HCT116 (cell line): ENCODE measurements at regions of chr1 and their contacts with region 1.

Region 1: GRCh38 chr1:28409090-28409489 is 39.5 kb downstream of the PHACTR4 start:
- DNase-seq: no peak
- ATAC-seq: no peak
- H3K4me3 ChIP-seq: no peak overlapping the region
- H3K27ac ChIP-seq: no peak overlapping the region
- H3K4me1 ChIP-seq: peaks cover 0 to 5% of the 10 kb centered on the region in 2 experiments; a peak in 2 of 4 replicates
- H3K27me3 ChIP-seq: no peaks in the 10 kb centered on the region
- CTCF ChIP-seq: no peak
- POLR2A ChIP-seq: no peak
- RAD21 ChIP-seq: no peak

Region 2: GRCh38 chr1:28510665-28511440 is 101.8 kb after region 1 on chr1:
- CTCF ChIA-PET with region 1: interaction called, 6 read pairs
- POLR2A ChIA-PET with region 1: interaction called, 11 read pairs
- RAD21 ChIA-PET with region 1: no interaction called
- intact Hi-C with region 1: loop called (anchors 2 kb)
- DNase-seq: no peak
- ATAC-seq: peak; percentile 24
- H3K4me3 ChIP-seq: no peak overlapping the region
- H3K27ac ChIP-seq: peak overlapping the region; percentile 97
- H3K4me1 ChIP-seq: peaks cover 19 to 65% of the 10 kb centered on the region in 2 experiments
- H3K27me3 ChIP-seq: no peaks in the 10 kb centered on the region
- CTCF ChIP-seq: no peak
- POLR2A ChIP-seq: peak; percentile 69
- RAD21 ChIP-seq: no peak

Region 3: DNA sequence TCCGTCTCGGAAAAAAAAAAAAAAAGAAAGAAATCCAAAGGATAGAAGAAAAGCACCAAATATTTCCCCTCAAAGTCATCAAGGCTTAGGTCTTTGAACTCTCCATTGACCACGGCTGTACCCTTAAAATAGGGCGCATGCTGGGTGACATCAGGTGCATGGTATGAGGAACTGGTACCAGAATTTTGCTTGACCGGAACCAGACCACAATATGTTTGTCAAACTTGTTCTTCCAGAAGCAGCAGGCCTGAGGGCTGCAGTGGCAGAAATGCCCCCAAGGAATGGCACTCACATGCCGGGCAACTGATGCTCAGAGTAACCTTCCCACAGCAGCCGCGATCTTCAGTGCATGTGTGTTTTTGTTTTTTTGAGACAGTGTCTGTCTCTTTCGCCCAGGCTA is 117.8 kb after region 1 on chr1:
- CTCF ChIA-PET with region 1: no interaction called
- POLR2A ChIA-PET with region 1: no interaction called
- RAD21 ChIA-PET with region 1: no interaction called
- intact Hi-C with region 1: no loop called
- DNase-seq: peak; percentile 87
- ATAC-seq: peak; percentile 81
- H3K4me3 ChIP-seq: peak overlapping the region in 1 of 2 experiments; percentile 1; a peak in 1 of 4 replicates
- H3K27ac ChIP-seq: peak overlapping the region; percentile 73
- H3K4me1 ChIP-seq: peaks cover 42 to 63% of the 10 kb centered on the region in 2 experiments
- H3K27me3 ChIP-seq: no peaks in the 10 kb centered on the region
- CTCF ChIP-seq: no peak
- POLR2A ChIP-seq: no peak
- RAD21 ChIP-seq: no peak